PC-3 (cell line): ENCODE measurements at regions of chr3 and their contacts with region 1.

Region 1: DNA sequence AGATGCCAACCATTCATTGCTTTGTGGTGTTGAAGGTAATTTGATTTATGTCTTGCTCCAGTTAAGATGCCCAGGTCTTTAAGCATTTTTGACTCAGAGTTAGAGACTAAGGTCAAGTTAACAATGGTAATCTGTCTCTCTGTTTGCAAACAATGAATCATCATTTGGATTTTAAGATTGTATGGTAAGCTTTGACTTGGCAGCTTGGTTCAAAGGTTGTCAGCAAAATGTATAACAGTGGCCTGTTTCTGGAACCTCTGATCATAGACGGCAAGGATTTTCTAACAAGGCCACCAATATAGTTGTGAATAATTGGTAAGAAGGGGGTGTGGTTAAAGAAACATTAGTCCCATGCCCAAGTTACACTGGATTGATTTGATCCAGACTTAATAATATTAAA is 775.1 kb upstream of the GOLIM4 start:
- DNase-seq: peak; percentile 90
- ATAC-seq: peak; percentile 98
- H3K4me3 ChIP-seq: peak overlapping the region; percentile 4; the same call in 1 of the 2 replicates
- H3K27ac ChIP-seq: peak overlapping the region; percentile 64
- H3K4me1 ChIP-seq: peaks cover 28% of the 10 kb centered on the region
- H3K27me3 ChIP-seq: no peaks in the 10 kb centered on the region
- CTCF ChIP-seq: no peak

Region 2: GRCh38 chr3:168884353-168884903 is 13.6 kb after region 1 on chr3:
- CTCF ChIA-PET with region 1: interaction called, 4 read pairs
- POLR2A ChIA-PET with region 1: interaction called, 4 read pairs
- intact Hi-C with region 1: loop called (anchors 1 kb)
- DNase-seq: peak; percentile 98
- ATAC-seq: peak; percentile 66
- H3K4me3 ChIP-seq: peak overlapping the region; percentile 51
- H3K27ac ChIP-seq: peak overlapping the region; percentile 97
- H3K4me1 ChIP-seq: peaks cover 54% of the 10 kb centered on the region
- H3K27me3 ChIP-seq: no peaks in the 10 kb centered on the region
- CTCF ChIP-seq: no peak

Region 3: GRCh38 chr3:169133178-169134161 is 262.6 kb after region 1 on chr3:
- CTCF ChIA-PET with region 1: no interaction called
- POLR2A ChIA-PET with region 1: no interaction called
- intact Hi-C with region 1: no loop called
- DNase-seq: peak; percentile 63
- ATAC-seq: peak; percentile 67
- H3K4me3 ChIP-seq: no peak overlapping the region
- H3K27ac ChIP-seq: no peak overlapping the region; the same call in 1 of the 2 replicates
- H3K4me1 ChIP-seq: peaks cover 23% of the 10 kb centered on the region
- H3K27me3 ChIP-seq: no peaks in the 10 kb centered on the region
- CTCF ChIP-seq: peak; percentile 80